ENCODE measurements at regions of chr7 and their contacts with region 1.

Region 1: DNA sequence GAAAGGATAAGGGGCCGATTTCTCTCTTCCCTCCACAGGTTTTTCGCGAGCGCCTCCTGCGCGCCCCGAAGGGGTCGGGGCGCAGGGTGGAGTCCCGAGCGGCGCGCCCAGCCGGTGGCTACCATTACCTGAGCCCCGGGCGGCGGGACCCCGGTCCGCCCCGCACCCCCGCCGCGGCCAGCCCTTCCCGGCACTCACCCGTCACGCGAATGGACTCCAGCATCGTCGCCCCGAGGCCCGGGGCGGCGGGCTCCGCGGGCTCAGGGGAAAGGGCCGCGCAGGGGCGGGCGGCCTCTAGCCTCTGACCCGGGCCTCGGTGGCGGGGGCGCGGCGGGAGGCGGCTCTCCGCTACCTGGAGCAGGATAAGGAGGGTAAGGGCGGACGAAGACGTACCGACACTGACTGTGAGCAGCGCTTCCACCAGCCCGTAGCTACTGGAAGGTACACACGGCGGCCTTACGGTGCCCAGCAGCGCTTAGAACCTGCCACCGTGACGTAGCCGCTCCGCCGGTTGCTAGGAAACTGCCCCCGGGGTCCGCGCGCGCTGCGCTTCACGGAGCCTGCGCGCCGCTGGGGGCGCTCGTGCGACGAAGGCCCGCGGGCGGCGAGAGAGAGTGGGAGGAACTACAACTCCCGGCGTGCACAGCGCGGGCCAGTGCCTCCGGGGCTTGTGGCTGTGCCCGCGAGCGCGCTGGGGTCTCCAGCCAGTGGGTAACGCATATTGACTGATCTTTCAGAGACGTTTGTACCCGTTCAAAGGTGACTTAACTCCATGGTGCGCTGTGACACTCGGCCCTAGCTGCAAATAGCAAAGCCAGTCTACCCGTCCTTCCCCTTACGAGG is 22.7 kb upstream of the ANLN start:
- DNase-seq: peak; percentile 93 to 97 (median 96)
- H3K4me3 ChIP-seq: peak overlapping the region; percentile 68 to 91 (median 82)
- H3K27ac ChIP-seq: peak overlapping the region; percentile 72 to 86
- H3K4me1 ChIP-seq: peaks cover 2 to 11% (median 5%) of the 10 kb centered on the region in 4 experiments
- H3K27me3 ChIP-seq: no peaks in the 10 kb centered on the region

Region 2: GRCh38 chr7:36379831-36380504 is 13.0 kb after region 1 on chr7:
- CTCF ChIA-PET with region 1: interaction called, 12 read pairs
- POLR2A ChIA-PET with region 1: interaction called, 3 read pairs
- DNase-seq: no peak
- H3K4me3 ChIP-seq: no peak overlapping the region
- H3K27ac ChIP-seq: no peak overlapping the region
- H3K4me1 ChIP-seq: no peaks in the 10 kb centered on the region
- H3K27me3 ChIP-seq: no peaks in the 10 kb centered on the region

Region 3: GRCh38 chr7:36389371-36390198 is 22.6 kb after region 1 on chr7 and contains the start of gene ANLN:
- CTCF ChIA-PET with region 1: interaction called, 15 read pairs
- POLR2A ChIA-PET with region 1: no interaction called
- DNase-seq: peak; percentile 87 to 92 (median 91)
- H3K4me3 ChIP-seq: peak within 1 kb of the TSS; percentile 88 to 99 (median 96)
- H3K27ac ChIP-seq: peak within 1 kb of the TSS in 1 of 2 experiments; percentile 69
- H3K4me1 ChIP-seq: peaks cover 10 to 34% (median 16%) of the 10 kb centered on the region in 4 experiments
- H3K27me3 ChIP-seq: no peaks in the 10 kb centered on the region

Measured in common myeloid progenitor, CD34-positive (primary cell).